ENCODE measurements at regions of chr1 and their contacts with region 1.

Region 1: DNA sequence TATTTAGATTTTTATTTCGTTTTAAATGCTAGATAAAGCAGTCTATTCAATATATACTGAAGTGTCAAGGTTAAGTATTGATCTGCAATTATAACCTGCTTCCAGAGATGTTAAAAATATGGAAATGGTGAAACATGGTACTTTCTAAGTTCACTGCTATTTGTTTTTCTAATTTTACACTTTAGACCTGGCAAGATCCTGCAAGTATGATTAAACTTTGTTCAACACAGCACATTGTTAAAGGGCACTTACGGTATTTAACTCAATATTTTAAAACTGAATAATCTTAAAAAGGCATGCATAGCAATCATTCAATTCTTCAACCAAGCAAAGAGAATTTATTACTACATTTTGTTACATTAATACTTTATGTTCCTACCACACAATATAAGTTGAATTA is 35.7 kb upstream of the ZZZ3 start:
- DNase-seq: no peak
- H3K4me3 ChIP-seq: no peak overlapping the region
- H3K27ac ChIP-seq: no peak overlapping the region
- H3K4me1 ChIP-seq: no peaks in the 10 kb centered on the region
- H3K27me3 ChIP-seq: no peaks in the 10 kb centered on the region
- CTCF ChIP-seq: no peak

Region 2: DNA sequence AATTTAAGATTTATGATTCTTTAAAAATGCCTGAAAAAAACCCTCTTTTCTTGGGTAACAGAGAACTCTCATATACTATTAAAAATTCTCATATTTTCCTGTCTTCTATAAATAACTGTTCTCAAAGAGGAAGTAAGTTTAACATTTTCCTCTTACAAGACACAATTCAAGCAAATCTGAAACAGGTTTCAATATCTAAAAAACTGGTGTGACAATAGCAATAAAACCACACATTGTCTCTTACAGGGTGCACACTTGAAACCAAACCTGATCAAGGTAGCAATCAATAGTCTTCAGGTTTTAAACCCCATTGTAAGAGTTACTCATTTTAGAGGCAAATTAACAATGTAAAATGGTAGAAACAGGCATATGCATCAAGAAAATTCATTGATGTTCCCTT is 232.7 kb after region 1 on chr1:
- CTCF ChIA-PET with region 1: no interaction called
- POLR2A ChIA-PET with region 1: no interaction called
- intact Hi-C with region 1: loop called (anchors 10 kb)
- DNase-seq: no peak
- H3K4me3 ChIP-seq: no peak overlapping the region
- H3K27ac ChIP-seq: no peak overlapping the region
- H3K4me1 ChIP-seq: no peaks in the 10 kb centered on the region
- H3K27me3 ChIP-seq: no peaks in the 10 kb centered on the region
- CTCF ChIP-seq: no peak